ENCODE measurements at regions of chr9 and their contacts with region 1.

Region 1: GRCh38 chr9:91361291-91362050 is at the start of gene AUH:
- DNase-seq: peak; percentile 87
- ATAC-seq: peak; percentile 92
- H3K4me3 Mint-ChIP-seq: peak within 1 kb of the TSS; percentile 89
- H3K27ac Mint-ChIP-seq: peak within 1 kb of the TSS; percentile 87
- H3K4me1 Mint-ChIP-seq: peaks cover 45% of the 10 kb centered on the region
- H3K27me3 Mint-ChIP-seq: no peaks in the 10 kb centered on the region
- CTCF ChIP-seq: no peak
- total RNA-seq, gene AUH: 30.8 to 31.1 TPM

Region 2: GRCh38 chr9:90815183-90815943 is 546.1 kb before region 1 on chr9:
- CTCF ChIA-PET with region 1: no interaction called
- POLR2A ChIA-PET with region 1: no interaction called
- intact Hi-C with region 1: no loop called
- DNase-seq: peak; percentile 26
- ATAC-seq: no peak
- H3K4me3 Mint-ChIP-seq: no peak overlapping the region
- H3K27ac Mint-ChIP-seq: peak overlapping the region; percentile 64
- H3K4me1 Mint-ChIP-seq: peaks cover 16% of the 10 kb centered on the region
- H3K27me3 Mint-ChIP-seq: peaks cover 2% of the 10 kb centered on the region
- CTCF ChIP-seq: no peak

Region 3: GRCh38 chr9:91207729-91208418 is 153.6 kb before region 1 on chr9:
- CTCF ChIA-PET with region 1: interaction called, 5 read pairs
- POLR2A ChIA-PET with region 1: interaction called, 3 read pairs
- intact Hi-C with region 1: loop called (anchors 5 kb)
- DNase-seq: peak; percentile 55
- ATAC-seq: peak; percentile 76
- H3K4me3 Mint-ChIP-seq: peak overlapping the region; percentile 35
- H3K27ac Mint-ChIP-seq: peak overlapping the region; percentile 98
- H3K4me1 Mint-ChIP-seq: peaks cover 69% of the 10 kb centered on the region
- H3K27me3 Mint-ChIP-seq: no peaks in the 10 kb centered on the region
- CTCF ChIP-seq: no peak

Region 4: DNA sequence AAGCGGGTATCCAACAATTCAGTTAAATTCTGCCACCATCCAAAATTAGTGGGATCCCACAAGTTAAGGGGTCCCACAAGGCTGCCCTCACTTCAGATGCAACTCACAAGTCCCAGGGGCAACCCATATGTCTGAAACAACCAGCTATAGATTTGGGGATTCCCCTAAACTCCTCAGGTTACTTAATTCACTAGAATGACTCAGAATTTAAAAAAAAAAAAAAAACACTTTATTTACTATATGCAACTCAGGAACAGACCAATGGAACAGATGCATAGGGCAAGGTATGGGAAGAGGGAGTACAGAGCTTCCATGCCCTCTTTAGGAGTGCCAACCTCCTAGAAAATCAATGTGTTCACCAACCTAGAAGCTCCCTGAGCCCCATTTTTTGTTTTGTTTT is 14.8 kb before region 1 on chr9:
- CTCF ChIA-PET with region 1: interaction called, 7 read pairs
- POLR2A ChIA-PET with region 1: interaction called, 28 read pairs
- intact Hi-C with region 1: no loop called
- DNase-seq: peak; percentile 21
- ATAC-seq: peak; percentile 71
- H3K4me3 Mint-ChIP-seq: no peak overlapping the region
- H3K27ac Mint-ChIP-seq: no peak overlapping the region
- H3K4me1 Mint-ChIP-seq: peaks cover 58% of the 10 kb centered on the region
- H3K27me3 Mint-ChIP-seq: no peaks in the 10 kb centered on the region
- CTCF ChIP-seq: no peak

Region 5: DNA sequence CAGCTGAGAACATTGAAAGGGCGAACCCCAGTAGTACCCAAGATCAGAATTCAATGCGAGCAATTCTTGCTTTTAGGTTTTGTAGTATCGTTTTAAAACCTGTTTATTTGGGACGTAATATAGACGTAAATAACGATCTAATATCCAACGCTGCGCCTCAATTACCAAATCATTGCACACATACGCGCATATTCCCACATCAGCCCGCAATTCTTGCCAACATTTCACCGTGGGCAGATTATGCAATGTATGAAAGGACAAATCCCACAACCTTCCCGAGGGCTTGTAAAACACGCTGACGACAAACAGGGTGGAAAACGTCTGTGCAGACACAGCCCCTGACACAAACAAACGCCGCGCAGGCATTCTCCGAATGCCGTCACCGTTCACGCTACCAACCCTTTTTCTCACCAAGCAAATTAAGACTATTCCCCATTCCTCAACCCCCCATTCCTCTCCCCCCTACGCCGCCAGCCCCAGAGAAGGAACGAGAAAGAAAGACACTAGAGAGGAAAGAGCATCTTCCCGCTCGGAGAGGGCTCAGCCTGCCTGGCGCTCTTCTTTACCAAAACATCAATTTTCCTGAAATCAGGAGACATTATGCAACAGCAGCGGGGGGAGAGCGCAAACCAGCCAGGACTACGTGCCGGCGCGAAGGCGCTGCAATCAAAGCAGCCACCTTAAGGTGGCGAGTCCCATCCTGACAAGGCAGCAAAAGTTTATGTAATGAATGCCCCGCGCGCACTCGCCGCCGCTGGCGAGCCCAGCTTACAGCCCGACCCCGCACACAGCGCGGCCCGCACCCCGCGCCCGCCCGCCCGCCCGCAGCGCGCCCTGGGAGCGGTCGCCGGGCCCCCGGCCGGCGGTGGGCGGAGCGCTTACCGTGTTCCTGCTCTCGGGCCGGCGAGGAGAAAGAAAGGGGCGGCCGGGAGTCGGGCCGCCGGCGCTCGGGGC is 61.6 kb after region 1 on chr9:
- CTCF ChIA-PET with region 1: interaction called, 32 read pairs
- POLR2A ChIA-PET with region 1: interaction called, 32 read pairs
- intact Hi-C with region 1: loop called (anchors 5 kb)
- DNase-seq: peak; percentile 74
- ATAC-seq: peak; percentile 34
- H3K4me3 Mint-ChIP-seq: peak overlapping the region; percentile 99
- H3K27ac Mint-ChIP-seq: peak overlapping the region; percentile 88
- H3K4me1 Mint-ChIP-seq: peaks cover 58% of the 10 kb centered on the region
- H3K27me3 Mint-ChIP-seq: peaks cover 4% of the 10 kb centered on the region
- CTCF ChIP-seq: peak; percentile 30

Measured in activated CD8-positive, alpha-beta T cell treated with anti-CD3 and anti-CD28 coated beads for 36 hours (primary cell).